WTC11 (cell line): ENCODE measurements at regions of chr1 and their contacts with region 1.

Region 1: DNA sequence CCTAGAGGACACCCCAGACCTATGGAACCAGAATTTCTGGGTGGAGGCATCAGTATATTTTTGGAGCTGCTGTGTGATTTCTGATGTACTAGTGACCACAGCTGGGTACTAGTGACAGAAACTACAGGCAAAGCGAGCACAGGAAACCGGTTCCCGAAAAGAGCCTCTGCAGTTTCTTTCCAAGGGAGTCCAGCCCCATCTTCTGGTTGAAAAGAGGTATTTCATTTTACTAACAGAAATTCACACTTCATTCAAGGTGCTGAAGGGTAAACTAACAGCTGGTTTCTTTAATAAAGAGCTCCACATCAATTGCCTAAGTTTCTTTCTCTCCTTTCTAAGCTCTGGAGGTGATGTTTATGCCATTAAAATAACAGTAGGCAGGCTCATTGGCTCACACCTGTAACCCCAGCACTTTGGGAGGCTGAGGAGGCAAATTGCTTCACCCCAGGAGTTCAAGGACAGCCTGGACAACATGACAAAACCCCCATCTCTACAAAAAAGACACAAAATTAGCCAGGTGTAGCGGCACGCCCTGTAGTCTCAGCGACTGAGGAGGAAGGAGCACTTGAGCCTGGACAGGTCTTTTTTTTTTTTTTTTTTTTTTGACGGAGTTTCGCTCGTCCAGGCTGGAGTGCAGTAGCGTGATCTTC is 22.0 kb downstream of the THAP3 start:
- DNase-seq: peak; percentile 27
- ATAC-seq: peak; percentile 76
- H3K4me3 Mint-ChIP-seq: no peak overlapping the region
- H3K27ac Mint-ChIP-seq: peak overlapping the region; percentile 71
- H3K4me1 Mint-ChIP-seq: peaks cover 16% of the 10 kb centered on the region
- H3K27me3 Mint-ChIP-seq: no peaks in the 10 kb centered on the region
- CTCF ChIP-seq: peak; percentile 60

Region 2: GRCh38 chr1:6367381-6368012 is 279.1 kb before region 1 on chr1:
- CTCF ChIA-PET with region 1: no interaction called
- POLR2A ChIA-PET with region 1: no interaction called
- DNase-seq: no peak
- ATAC-seq: no peak
- H3K4me3 Mint-ChIP-seq: no peak overlapping the region
- H3K27ac Mint-ChIP-seq: peak overlapping the region; percentile 45; the same call in 1 of the 2 replicates
- H3K4me1 Mint-ChIP-seq: peaks cover 10% of the 10 kb centered on the region
- H3K27me3 Mint-ChIP-seq: no peaks in the 10 kb centered on the region
- CTCF ChIP-seq: no peak

Region 3: GRCh38 chr1:6554031-6554906 is 92.4 kb before region 1 on chr1 and contains the start of gene NOL9:
- CTCF ChIA-PET with region 1: interaction called, 10 read pairs
- POLR2A ChIA-PET with region 1: no interaction called
- DNase-seq: peak; percentile 97
- ATAC-seq: peak; percentile 93
- H3K4me3 Mint-ChIP-seq: peak within 1 kb of the TSS; percentile 84
- H3K27ac Mint-ChIP-seq: no peak within 1 kb of the TSS
- H3K4me1 Mint-ChIP-seq: peaks cover 12% of the 10 kb centered on the region
- H3K27me3 Mint-ChIP-seq: no peaks in the 10 kb centered on the region; the same call in 1 of the 2 replicates
- CTCF ChIP-seq: peak; percentile 87
- total RNA-seq, gene NOL9: 36.0 to 37.4 TPM (median 37.4 TPM) in 3 replicates

Region 4: GRCh38 chr1:6602669-6603237 is 43.9 kb before region 1 on chr1 and contains the start of gene KLHL21:
- CTCF ChIA-PET with region 1: interaction called, 10 read pairs
- POLR2A ChIA-PET with region 1: interaction called, 4 read pairs
- DNase-seq: peak; percentile 78
- ATAC-seq: peak; percentile 51
- H3K4me3 Mint-ChIP-seq: peak within 1 kb of the TSS; percentile 80
- H3K27ac Mint-ChIP-seq: peak within 1 kb of the TSS; percentile 97
- H3K4me1 Mint-ChIP-seq: peaks cover 23% of the 10 kb centered on the region
- H3K27me3 Mint-ChIP-seq: no peaks in the 10 kb centered on the region; the same call in 1 of the 2 replicates
- CTCF ChIP-seq: no peak
- total RNA-seq, gene KLHL21: 15.1 to 17.6 TPM (median 15.3 TPM) in 3 replicates

Region 5: DNA sequence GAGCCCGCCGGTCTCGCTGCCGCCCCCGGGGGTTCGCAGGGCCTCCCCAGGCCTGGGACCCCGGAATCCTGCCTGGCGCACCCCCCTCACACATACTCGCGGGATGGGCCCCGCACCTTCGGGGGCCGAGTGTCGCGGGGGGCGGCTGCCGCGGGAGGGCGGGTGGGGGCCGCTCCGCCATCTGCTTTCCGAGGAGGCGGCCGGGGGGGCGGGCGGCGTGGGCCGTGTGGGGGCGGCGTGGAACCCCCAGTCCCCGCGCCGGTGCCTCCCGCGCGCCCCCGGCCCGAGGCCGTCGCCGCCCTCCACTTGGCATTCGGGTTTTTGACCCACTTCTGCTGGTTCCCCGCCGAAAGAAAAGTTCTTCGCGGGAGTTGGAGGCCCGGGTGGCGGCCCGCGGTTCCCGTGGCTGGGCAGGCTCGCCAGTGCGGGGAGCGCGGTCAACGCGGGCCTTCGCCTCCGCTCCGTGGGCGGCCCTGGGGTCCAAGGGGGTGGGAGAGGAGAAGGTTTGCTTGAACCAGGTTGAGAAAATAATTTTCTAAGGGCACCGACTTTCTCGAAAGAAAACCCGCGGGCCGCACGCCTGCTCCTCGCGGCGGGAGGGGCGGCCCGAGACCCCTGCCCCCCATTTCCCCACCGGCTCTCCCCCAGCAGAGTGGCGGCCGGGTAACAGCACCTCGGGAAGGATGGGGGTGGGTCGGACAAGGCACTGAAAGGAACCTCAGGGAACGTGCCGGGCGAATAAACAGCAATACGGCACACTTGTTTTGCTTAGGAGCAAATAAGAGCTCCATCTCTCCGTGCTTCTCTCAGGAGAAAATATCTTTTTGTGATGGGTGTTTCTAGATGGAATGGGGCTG is 31.5 kb before region 1 on chr1:
- CTCF ChIA-PET with region 1: interaction called, 10 read pairs
- POLR2A ChIA-PET with region 1: no interaction called
- DNase-seq: no peak
- ATAC-seq: no peak
- H3K4me3 Mint-ChIP-seq: peak overlapping the region; percentile 75
- H3K27ac Mint-ChIP-seq: peak overlapping the region; percentile 41
- H3K4me1 Mint-ChIP-seq: peaks cover 17% of the 10 kb centered on the region
- H3K27me3 Mint-ChIP-seq: peaks cover 13% of the 10 kb centered on the region
- CTCF ChIP-seq: no peak

Region 6: DNA sequence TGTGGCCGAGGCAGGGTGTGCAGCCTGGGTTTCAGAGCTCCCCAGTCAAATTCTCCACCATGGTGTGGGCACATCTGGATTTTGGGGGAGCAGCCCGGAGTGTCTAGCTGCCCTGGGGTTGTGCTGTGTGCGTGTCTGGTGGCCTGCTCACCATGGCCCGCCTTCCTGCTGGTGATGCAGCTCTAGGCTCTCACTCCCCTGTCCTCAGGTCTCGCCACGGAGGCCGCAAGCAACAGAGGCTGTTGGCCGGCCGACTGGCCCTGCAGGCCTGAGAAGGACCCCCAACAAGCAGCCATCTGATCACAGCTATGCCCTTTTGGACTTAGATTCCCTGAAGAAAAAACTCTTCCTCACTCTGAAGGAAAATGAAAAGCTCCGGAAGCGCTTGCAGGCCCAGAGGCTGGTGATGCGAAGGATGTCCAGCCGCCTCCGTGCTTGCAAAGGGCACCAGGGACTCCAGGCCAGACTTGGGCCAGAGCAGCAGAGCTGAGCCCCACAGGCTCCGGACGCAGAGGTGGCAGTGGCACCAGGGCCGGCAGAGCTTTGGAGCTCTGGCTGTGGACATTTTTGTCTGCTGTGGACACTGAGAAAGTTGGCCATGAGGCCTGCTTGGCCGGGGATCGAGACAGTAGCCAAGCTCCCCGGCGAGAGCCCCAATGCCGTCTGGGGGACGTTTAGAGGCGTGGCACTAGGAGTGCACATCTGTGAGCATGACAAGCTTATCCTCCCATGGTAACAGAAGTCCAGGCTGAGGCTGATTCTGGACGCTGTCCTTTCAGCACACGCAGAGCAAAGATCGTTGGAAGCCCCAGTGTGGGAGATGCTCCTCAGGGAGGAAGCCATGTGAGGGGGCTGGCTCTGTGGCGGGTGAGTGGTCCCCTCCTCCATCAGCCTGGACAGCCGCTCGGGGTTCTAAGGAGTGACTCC is 13.8 kb before region 1 on chr1:
- CTCF ChIA-PET with region 1: interaction called, 15 read pairs
- POLR2A ChIA-PET with region 1: interaction called, 3 read pairs
- DNase-seq: no peak
- ATAC-seq: no peak
- H3K4me3 Mint-ChIP-seq: no peak overlapping the region
- H3K27ac Mint-ChIP-seq: 0 out of 2 replicates have a peak overlapping the region, but pooled peaks have one; percentile 19
- H3K4me1 Mint-ChIP-seq: no peaks in the 10 kb centered on the region
- H3K27me3 Mint-ChIP-seq: no peaks in the 10 kb centered on the region
- CTCF ChIP-seq: no peak

Region 7: DNA sequence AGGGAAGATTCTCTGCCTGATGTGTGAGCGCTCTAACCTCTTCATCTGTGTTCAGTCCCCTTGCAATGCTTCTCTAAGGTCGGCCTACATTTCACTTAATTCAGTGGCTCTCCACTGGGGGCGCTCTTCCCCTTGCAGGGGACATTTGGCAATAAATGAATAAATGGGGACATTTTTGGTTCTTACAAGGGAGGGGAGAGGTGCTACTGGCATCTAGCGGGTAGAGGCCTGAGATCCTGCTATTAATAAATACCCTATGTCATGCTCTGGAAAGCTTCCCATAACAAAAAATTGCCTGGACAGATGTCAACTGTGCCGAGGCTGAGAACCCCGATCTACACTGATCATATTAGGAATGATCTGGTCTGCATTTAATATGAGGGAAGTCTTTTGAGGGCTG is 80.9 kb after region 1 on chr1:
- CTCF ChIA-PET with region 1: no interaction called
- POLR2A ChIA-PET with region 1: no interaction called
- DNase-seq: peak; percentile 79
- ATAC-seq: peak; percentile 85
- H3K4me3 Mint-ChIP-seq: no peak overlapping the region
- H3K27ac Mint-ChIP-seq: no peak overlapping the region
- H3K4me1 Mint-ChIP-seq: peaks cover 23% of the 10 kb centered on the region
- H3K27me3 Mint-ChIP-seq: peaks cover 7% of the 10 kb centered on the region
- CTCF ChIP-seq: peak; percentile 93

Region 8: DNA sequence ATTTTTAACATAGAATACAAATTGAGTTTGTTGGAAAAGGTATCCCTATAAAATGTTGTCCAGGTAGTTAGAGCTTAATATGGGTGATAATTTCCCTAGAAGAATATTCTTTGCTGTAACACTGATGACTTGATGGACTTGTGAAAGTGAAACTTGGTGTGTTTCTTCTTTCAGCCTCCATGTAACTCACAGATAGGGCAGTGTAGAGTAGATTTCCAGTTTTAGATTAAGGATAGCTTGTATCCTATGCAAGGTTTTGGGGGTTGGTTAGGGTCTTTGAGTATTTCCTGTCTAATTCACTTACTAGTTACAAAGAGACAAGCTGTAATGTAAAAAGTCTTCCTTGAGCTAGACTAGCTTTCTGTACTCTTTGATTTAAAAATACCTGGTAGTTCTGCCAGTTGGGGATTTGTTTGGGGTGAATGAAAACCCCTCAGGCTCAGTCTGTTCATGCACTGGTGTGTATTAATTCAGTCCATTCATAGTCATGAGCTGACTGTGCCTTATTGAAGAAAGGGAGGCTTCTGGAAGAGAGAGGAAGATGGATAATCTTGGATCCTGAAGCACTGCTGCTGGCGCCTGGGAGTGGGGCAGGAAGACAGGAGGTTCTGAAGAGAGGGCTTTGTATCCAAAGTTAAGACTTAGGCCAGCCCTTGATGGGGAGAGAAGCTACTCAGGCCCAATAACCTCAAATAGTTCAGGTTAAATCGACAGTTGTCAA is 222.2 kb after region 1 on chr1:
- CTCF ChIA-PET with region 1: no interaction called
- POLR2A ChIA-PET with region 1: no interaction called
- DNase-seq: no peak
- ATAC-seq: no peak
- H3K4me3 Mint-ChIP-seq: no peak overlapping the region
- H3K27ac Mint-ChIP-seq: peak overlapping the region; percentile 72
- H3K4me1 Mint-ChIP-seq: peaks cover 60% of the 10 kb centered on the region
- H3K27me3 Mint-ChIP-seq: no peaks in the 10 kb centered on the region
- CTCF ChIP-seq: no peak